ENCODE measurements at regions of chr12 and their contacts with region 1.

Region 1: DNA sequence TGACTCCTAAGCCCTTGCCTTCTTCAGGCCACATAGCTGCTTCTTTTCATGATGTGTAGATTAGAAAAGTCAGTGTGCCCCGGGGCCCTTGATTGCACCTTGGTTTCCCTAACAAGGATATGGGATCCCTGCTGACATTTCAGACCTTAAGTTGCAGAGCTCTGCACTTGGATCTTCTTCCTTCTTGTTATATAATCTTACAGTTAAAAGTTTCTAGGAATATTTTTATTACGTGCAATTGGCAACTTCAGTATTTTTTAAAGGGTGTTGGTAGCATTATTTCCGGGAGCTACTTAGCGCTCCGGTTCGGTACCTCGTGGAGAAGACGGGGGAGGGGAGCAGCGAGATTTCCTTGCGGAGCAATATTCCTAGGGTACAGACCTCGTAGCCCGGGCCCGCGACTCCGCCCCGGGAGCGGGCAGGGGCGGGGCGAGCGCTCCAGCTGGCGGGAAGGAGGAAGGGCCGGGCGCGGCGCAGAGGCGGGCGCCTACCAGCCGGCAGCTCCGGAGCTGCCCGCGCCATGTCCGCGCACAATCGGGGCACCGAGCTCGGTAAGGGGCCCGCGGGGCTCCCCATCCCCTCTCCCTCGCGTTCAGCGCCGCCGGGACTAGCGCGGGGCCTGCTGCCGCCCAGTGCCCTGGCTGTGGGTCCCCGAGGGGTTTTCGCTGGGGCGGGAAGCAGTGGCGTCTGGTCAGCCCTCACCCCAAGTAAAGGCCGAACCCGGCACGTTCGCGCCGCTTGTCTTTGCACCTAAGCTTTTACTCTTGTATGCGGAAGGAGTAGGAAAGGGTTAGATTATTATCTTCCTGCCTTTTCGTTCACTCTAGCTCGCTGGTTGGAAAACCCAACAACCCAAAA is at the start of gene DERA:
- DNase-seq: peak; percentile 2 to 77 (median 56)
- ATAC-seq: peak; percentile 89
- H3K4me3 ChIP-seq: peak within 1 kb of the TSS; percentile 57 to 79
- H3K4me3 Mint-ChIP-seq: peak within 1 kb of the TSS; percentile 90
- H3K27ac ChIP-seq: peak within 1 kb of the TSS; percentile 61 to 70
- H3K27ac Mint-ChIP-seq: peak within 1 kb of the TSS; percentile 81
- H3K4me1 ChIP-seq: peaks cover 6% of the 10 kb centered on the region
- H3K4me1 Mint-ChIP-seq: peaks cover 30% of the 10 kb centered on the region
- H3K27me3 ChIP-seq: no peaks in the 10 kb centered on the region
- H3K27me3 Mint-ChIP-seq: no peaks in the 10 kb centered on the region
- CTCF ChIP-seq: no peak
- total RNA-seq, gene DERA: 4.9 to 5.1 TPM

Region 2: DNA sequence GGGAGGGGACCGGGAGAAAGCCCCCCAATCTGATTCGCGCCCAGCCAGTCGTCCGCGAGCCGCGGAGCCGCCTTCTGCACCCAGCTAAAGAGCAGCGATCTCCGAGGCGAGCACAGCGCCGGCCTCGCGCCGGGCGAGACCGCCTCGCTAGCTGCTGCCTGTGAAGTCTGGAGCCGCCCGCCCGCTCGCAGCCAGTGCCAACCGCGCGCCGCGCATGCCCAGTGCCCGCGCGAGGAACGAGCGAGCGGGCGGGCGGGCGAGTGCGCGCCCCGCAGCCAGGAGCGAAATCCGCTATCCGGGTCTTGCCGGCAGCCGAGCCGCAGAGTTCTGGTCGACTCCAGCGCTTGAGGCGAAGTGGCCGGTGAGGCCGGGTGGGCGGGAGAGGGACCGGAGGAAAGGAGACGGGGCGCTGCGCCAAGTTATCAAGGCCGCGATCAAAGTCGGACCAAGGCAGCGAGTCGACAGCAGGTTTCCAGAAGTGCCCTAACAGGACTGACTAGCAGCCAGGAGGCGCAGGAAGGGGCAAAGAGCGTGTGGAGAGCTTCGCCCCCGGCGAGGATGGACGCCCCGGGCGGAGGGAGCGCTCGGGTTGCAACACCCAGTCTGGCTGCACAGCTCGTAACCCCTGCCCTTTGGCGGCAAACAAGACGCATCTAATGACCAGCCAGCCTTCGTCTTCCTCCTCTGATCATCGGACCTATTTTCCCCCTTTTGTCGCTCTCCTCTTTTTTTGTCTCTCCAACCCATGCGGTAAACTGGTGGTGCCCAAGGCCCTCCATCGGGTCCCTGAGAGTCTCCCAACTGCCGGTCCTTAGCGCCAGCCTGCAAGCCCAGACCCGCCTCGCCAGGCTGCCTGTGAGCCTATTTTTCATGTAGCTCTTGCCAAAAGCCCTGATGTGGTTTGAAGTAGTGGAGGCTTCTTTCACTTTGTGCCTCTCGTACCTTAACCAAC is 121.6 kb before region 1 on chr12 and contains the start of gene EPS8:
- CTCF ChIA-PET with region 1: no interaction called
- POLR2A ChIA-PET with region 1: no interaction called
- intact Hi-C with region 1: loop called in 1 of 2 experiments (anchors 1 kb)
- DNase-seq: peak; percentile 76 to 93 (median 87)
- ATAC-seq: peak; percentile 88
- H3K4me3 ChIP-seq: peak within 1 kb of the TSS; percentile 68 to 87
- H3K4me3 Mint-ChIP-seq: peak within 1 kb of the TSS; percentile 97
- H3K27ac ChIP-seq: peak within 1 kb of the TSS in 1 of 2 experiments; percentile 41
- H3K27ac Mint-ChIP-seq: peak within 1 kb of the TSS; percentile 42
- H3K4me1 ChIP-seq: peaks cover 8% of the 10 kb centered on the region
- H3K4me1 Mint-ChIP-seq: peaks cover 14% of the 10 kb centered on the region
- H3K27me3 ChIP-seq: peaks cover 8 to 15% of the 10 kb centered on the region in 2 experiments
- H3K27me3 Mint-ChIP-seq: peaks cover 39% of the 10 kb centered on the region
- CTCF ChIP-seq: no peak
- total RNA-seq, gene EPS8: 1.7 to 2.1 TPM

Region 3: DNA sequence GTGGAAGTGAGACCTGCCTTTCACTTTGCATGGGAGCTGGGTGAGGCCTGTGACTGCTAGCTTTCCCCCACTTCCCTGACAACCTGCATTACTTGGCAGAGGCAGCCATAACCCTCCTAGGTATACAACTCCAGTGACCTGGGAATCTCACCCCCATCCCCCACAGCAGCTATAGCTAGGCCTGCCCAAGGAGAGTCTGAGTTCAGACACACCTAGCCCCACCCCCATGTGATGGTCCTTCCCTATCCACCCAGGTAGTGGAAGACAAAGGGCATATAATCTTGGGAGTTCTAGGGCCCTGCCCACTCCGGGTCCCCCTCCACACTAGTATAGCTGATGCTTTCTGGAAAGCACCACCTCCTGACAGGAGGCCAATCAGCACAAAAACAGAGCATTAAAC is 35.2 kb before region 1 on chr12:
- CTCF ChIA-PET with region 1: no interaction called
- POLR2A ChIA-PET with region 1: no interaction called
- intact Hi-C with region 1: no loop called
- DNase-seq: no peak
- ATAC-seq: no peak
- H3K4me3 ChIP-seq: no peak overlapping the region
- H3K4me3 Mint-ChIP-seq: peak overlapping the region; percentile 76
- H3K27ac ChIP-seq: no peak overlapping the region
- H3K27ac Mint-ChIP-seq: no peak overlapping the region
- H3K4me1 ChIP-seq: no peaks in the 10 kb centered on the region
- H3K4me1 Mint-ChIP-seq: peaks cover 5% of the 10 kb centered on the region
- H3K27me3 ChIP-seq: peaks cover 0 to 2% of the 10 kb centered on the region in 2 experiments
- H3K27me3 Mint-ChIP-seq: no peaks in the 10 kb centered on the region
- CTCF ChIP-seq: no peak

Measured in CD8-positive, alpha-beta T cell (primary cell).